ENCODE measurements at regions of chr17 and their contacts with region 1.

Region 1: DNA sequence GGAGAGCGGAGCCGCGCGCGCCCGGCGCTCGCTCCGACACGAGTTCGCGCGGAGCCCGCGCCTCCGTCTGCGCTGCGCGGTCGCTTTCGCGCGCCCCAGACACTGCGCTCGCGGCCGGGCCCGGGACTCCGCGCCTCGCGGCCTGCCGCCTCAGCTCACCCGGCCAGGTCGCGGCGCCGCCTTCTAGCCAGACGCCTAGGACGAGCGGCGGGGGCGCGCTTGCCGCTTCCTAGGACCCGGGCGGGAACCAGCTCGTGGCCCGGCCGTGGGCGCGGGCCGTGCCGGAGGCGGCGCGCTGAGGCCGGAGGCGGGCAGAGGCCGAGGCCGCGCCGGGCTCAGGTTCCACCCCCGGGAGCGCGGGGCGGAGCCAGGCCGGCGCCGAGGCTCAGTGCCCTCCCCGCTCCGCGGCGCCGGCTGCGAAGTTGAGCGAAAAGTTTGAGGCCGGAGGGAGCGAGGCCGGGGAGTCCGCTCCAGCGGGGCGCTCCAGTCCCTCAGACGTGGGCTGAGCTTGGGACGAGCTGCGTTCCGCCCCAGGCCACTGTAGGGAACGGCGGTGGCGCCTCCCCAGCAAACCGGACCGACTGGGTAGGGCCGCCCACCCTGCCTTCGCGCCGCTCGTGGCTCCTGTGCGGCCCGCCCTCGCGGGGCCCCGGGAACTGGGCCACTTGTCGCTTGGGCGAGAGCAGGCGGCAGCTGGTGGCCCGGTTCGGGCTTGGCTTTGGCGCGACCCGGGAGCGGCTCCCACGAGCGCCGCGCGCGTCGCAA is at the start of gene SPHK1:
- DNase-seq: peak; percentile 89
- ATAC-seq: peak; percentile 68
- H3K4me3 ChIP-seq: peak within 1 kb of the TSS; percentile 73
- H3K27ac ChIP-seq: peak within 1 kb of the TSS; percentile 60
- H3K4me1 ChIP-seq: peaks cover 21% of the 10 kb centered on the region
- H3K27me3 ChIP-seq: no peaks in the 10 kb centered on the region
- CTCF ChIP-seq: no peak
- total RNA-seq, gene SPHK1: 54.2 and 59.7 TPM in 2 replicates

Region 2: GRCh38 chr17:76370261-76370993 is 14.0 kb before region 1 on chr17:
- CTCF ChIA-PET with region 1: interaction called, 17 read pairs
- POLR2A ChIA-PET with region 1: interaction called, 8 read pairs
- intact Hi-C with region 1: loop called (anchors 1 kb)
- DNase-seq: peak; percentile 99
- ATAC-seq: peak; percentile 97
- H3K4me3 ChIP-seq: peak overlapping the region; percentile 8; the same call in 1 of the 2 replicates
- H3K27ac ChIP-seq: peak overlapping the region; percentile 80
- H3K4me1 ChIP-seq: peaks cover 28% of the 10 kb centered on the region
- H3K27me3 ChIP-seq: no peaks in the 10 kb centered on the region
- CTCF ChIP-seq: peak; percentile 100

Region 3: DNA sequence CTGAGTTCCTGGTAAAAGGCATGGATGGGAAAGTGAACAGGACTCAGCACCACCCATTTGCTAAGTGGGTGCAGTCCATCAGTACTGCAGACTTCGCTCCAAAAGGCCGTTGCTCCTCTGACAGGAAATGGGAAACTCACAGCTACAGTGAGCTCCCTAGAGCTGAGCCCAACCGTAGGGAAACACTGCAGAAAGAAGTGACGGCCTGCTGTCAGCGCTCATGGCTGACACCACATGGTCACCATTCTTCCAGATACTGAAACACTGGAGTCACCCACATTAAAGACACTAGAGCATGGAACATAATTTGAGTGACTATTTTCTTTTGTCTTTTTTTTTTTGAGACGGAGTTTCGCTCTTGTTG is 36.6 kb after region 1 on chr17:
- CTCF ChIA-PET with region 1: no interaction called
- POLR2A ChIA-PET with region 1: no interaction called
- intact Hi-C with region 1: no loop called
- DNase-seq: no peak
- ATAC-seq: no peak; the same call in 1 of the 2 replicates
- H3K4me3 ChIP-seq: no peak overlapping the region
- H3K27ac ChIP-seq: no peak overlapping the region
- H3K4me1 ChIP-seq: no peaks in the 10 kb centered on the region
- H3K27me3 ChIP-seq: no peaks in the 10 kb centered on the region
- CTCF ChIP-seq: no peak